Tibial artery (tissue), 4 donors: ENCODE measurements at regions of chr20 and their contacts with region 1.

Region 1: GRCh38 chr20:31951530-31952453 is at the start of gene PDRG1:
- DNase-seq: peak; percentile 92 to 96
- H3K4me3 ChIP-seq: peak within 1 kb of the TSS; percentile 81 to 84
- H3K27ac ChIP-seq: peak within 1 kb of the TSS; percentile 83
- H3K4me1 ChIP-seq: peaks cover 0 to 26% (median 16%) of the 10 kb centered on the region in 4 donors
- H3K27me3 ChIP-seq: peaks cover 0 to 5% of the 10 kb centered on the region in 2 donors
- CTCF ChIP-seq: peak; percentile 91 to 94

Region 2: DNA sequence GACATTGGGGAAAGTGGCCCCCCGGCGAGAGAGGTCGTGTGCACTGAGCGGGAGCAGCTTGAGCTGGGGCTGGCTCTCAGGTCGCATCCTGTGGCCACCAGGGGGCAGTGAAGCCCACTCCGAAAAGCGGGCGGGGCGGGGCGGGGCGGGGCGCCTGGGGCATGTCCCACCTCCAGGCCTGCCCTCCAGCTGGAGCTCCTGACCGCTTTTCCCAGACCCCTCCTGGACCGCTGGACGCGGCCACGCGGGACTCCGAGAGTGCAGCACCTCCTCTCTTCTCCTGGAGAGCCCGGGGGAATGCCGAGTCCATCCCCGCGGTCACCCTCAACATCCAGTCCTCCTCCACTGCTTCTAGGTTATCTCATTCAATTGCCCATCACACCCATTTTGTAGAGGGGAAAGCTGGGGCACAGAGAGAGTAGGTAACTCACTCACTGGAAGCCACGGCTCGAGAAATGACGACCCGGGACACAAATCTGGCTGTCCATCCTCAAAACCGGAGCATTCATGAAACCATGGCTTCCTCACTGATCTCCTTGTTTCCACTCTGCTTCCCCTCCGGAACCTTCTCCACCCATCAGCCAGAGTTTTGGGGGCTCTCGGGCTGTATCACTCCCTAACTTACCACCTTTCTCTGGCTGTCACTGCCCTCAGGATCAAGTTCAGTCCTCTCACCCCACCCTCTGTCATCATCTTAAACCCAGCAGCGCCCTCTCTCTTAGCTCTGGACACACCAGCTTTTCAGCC is 290.0 kb before region 1 on chr20:
- intact Hi-C with region 1: loop called (anchors 10 kb)
- DNase-seq: peak; percentile 75 to 88
- H3K4me3 ChIP-seq: peak overlapping the region; percentile 30 to 43
- H3K27ac ChIP-seq: peak overlapping the region; percentile 50 to 67
- H3K4me1 ChIP-seq: peaks cover 0 to 51% (median 35%) of the 10 kb centered on the region in 4 donors
- H3K27me3 ChIP-seq: no peaks in the 10 kb centered on the region
- CTCF ChIP-seq: peak; percentile 64 to 81

Region 3: GRCh38 chr20:31723319-31724078 is 228.3 kb before region 1 on chr20:
- intact Hi-C with region 1: loop called (anchors 10 kb)
- DNase-seq: peak; percentile 96 to 98
- H3K4me3 ChIP-seq: peak overlapping the region; percentile 76
- H3K27ac ChIP-seq: peak overlapping the region; percentile 97 to 99
- H3K4me1 ChIP-seq: peaks cover 0 to 23% (median 19%) of the 10 kb centered on the region in 4 donors
- H3K27me3 ChIP-seq: no peaks in the 10 kb centered on the region
- CTCF ChIP-seq: peak; percentile 93 to 98

Region 4: DNA sequence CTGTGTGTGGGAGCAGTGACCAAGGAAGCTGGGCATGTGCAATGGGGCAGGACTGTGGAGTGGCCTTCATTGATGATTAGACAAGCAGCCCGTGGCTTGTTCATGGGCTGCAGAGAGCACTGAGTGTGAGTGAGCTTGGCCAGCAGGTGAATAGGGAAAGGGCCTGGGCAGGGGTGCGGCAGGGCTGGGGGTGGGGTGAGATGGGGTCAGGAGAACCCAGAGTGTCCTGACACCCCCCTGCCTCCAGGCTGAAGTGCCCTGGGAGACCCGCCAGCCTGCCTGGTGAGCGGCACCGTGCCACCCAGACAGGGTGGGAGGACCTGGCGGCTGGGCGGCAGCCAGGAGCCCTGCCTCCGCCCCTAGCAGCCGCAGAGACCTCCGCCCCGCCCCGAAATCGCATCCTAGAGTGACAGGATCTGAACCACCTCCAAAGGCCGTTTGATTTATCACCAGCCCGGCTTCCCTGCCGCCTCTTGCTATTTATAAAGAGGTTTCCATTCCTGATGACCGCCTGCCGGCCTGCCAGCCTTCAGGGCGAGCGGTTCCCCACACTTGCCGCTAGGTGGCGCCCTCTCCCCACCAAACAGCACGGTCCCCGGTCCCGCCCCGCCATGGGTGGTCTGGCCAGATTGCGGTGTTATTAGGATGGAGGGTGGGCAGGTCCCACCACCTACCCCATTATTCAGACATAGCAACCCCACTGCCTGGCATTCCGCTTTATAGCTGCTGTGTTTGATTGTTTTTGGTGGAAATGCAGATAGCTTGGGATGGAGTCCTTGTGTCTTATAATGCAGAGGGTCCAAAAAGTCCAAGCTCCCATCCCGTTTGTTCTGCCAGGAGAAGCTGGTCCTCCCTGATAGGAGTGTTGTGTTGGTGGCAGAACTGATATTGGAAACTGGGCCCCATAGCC is 129.1 kb before region 1 on chr20:
- intact Hi-C with region 1: loop called (anchors 10 kb)
- DNase-seq: peak; percentile 76 to 95
- H3K4me3 ChIP-seq: peak overlapping the region in 1 of 2 donors; percentile 1
- H3K27ac ChIP-seq: peak overlapping the region; percentile 46 to 80
- H3K4me1 ChIP-seq: peaks cover 0 to 56% (median 33%) of the 10 kb centered on the region in 4 donors
- H3K27me3 ChIP-seq: no peaks in the 10 kb centered on the region
- CTCF ChIP-seq: peak; percentile 94 to 99

Region 5: DNA sequence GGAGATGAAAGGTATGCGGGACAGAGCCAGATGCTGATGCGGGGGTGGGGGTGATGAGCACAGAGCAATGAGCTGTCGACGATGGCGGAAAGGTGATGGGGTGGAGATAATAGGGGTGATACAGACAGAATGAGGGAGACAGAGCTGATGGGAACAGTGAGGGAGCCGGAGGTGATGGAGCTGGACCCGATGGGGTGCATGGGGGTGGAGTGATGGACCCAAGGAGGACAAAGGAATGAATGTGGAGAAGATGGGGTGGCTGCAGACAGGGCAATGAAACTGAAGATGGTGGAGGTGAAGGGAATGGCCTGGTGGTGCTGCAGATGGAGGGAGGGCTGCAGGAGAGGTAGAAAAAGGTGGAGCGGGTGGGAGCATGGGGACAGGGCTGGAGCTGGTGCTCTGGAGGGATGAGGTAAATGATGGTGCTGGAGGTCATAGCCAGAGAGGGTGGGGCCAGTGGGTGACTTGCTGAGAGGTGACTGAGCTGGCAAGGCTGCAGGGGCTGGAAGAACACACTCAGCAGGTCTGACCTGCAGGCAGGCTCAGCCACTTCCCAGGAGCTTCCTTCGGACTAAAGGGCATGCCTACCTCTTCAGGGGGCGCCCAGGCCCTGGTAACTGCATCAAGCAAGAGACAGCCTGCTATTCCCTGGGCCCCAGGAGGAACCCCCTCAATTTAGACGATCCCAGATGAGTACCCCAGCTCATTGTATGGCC is 100.4 kb before region 1 on chr20:
- intact Hi-C with region 1: loop called (anchors 5 kb)
- DNase-seq: no peak
- H3K4me3 ChIP-seq: no peak overlapping the region
- H3K27ac ChIP-seq: no peak overlapping the region
- H3K4me1 ChIP-seq: peaks cover 0 to 9% (median 4%) of the 10 kb centered on the region in 4 donors
- H3K27me3 ChIP-seq: peaks cover 0 to 65% of the 10 kb centered on the region in 2 donors
- CTCF ChIP-seq: no peak

Region 6: GRCh38 chr20:32031007-32031958 is 79.5 kb after region 1 on chr20:
- intact Hi-C with region 1: loop called (anchors 5 kb)
- DNase-seq: peak; percentile 74 to 84
- H3K4me3 ChIP-seq: peak overlapping the region in 1 of 2 donors; percentile 38
- H3K27ac ChIP-seq: no peak overlapping the region
- H3K4me1 ChIP-seq: peaks cover 0 to 11% (median 7%) of the 10 kb centered on the region in 4 donors
- H3K27me3 ChIP-seq: peaks cover 0 to 40% of the 10 kb centered on the region in 2 donors
- CTCF ChIP-seq: peak; percentile 71 to 85